Tibial artery (tissue), 4 donors: ENCODE measurements at regions of chr1 and their contacts with region 1.

Region 1: DNA sequence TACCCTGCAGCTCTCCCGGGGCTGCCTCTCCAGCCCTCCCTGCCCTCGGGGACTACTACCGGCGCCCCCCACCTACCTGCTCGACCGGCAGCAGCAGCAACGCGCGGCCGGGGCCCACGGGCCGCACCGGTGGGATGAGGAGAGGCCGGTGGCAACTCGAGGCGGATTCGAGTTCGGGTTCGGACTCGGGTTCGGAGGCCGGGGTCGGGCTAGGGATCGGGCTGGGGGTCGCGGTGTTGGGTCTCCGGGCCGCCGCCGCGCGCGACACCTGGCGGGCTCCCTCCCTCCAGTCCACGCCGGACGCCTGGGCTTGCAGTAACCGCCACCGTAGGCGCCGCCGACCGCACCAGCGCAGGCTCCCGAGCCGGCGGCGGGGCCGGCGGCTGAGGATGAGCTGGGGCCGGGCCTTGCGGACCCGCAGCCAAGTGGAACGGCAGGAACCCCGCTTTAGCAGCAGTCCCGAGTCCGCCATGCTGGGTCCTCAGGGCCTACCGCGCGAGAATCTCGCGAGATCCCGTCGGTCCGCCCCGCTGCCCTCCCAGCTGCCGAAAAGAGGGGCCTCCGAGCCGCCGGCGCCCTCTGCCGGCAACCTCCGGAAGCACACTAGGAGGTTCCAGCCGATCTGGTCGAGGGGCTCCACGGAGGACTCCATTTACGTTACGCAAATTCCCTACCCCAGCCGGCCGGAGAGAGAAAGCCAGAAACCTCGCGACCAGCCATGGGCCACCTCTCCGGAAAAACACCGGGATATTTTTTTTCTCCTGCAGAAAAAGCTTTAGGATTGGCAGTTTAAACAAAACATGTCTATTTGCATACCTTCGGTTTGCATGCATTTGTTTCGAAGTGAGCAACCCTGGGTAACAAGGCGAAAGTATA is at the start of gene NOL9:
- DNase-seq: peak; percentile 88 to 96
- H3K4me3 ChIP-seq: peak within 1 kb of the TSS; percentile 85 to 100
- H3K27ac ChIP-seq: peak within 1 kb of the TSS; percentile 77 to 86
- H3K4me1 ChIP-seq: peaks cover 0 to 27% (median 23%) of the 10 kb centered on the region in 4 donors
- H3K27me3 ChIP-seq: no peaks in the 10 kb centered on the region
- CTCF ChIP-seq: peak; percentile 96 to 98

Region 2: DNA sequence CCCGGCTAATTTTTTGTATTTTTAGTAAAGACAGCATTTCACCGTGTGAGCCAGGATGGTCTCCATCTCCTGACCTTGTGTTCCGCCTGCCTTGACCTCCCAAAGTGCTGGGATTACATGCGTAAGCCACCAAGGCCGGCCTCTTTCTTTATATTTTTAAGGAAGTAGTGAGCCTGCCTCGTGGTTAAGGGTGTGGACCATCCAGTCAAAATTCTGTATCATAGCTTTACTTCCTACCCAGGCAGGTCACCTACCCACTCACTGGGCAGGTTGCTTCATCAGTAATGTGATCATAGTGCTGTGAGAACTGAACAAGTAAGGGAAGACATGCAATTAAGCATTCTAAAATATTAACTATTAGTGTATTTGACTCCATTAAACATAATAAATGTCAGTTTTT is 152.6 kb before region 1 on chr1:
- intact Hi-C with region 1: no loop called
- DNase-seq: no peak
- H3K4me3 ChIP-seq: no peak overlapping the region
- H3K27ac ChIP-seq: no peak overlapping the region
- H3K4me1 ChIP-seq: no peaks in the 10 kb centered on the region
- H3K27me3 ChIP-seq: peaks cover 0 to 29% of the 10 kb centered on the region in 2 donors
- CTCF ChIP-seq: no peak

Region 3: GRCh38 chr1:6489799-6490180 is 64.5 kb before region 1 on chr1:
- intact Hi-C with region 1: loop called (anchors 10 kb)
- DNase-seq: peak; percentile 42 to 80
- H3K4me3 ChIP-seq: peak overlapping the region; percentile 48 to 53
- H3K27ac ChIP-seq: no peak overlapping the region
- H3K4me1 ChIP-seq: peaks cover 5 to 47% (median 31%) of the 10 kb centered on the region in 4 donors
- H3K27me3 ChIP-seq: peaks cover 0 to 36% of the 10 kb centered on the region in 2 donors
- CTCF ChIP-seq: peak; percentile 65 to 90